Activated naive CD8-positive, alpha-beta T cell treated with anti-CD3 and anti-CD28 coated beads, Interleukin-2, amount 10 ng/mL, durations not matched to agents 7 days and 5 days (primary cell): ENCODE measurements at regions of chr14 and their contacts with region 1.

Region 1: DNA sequence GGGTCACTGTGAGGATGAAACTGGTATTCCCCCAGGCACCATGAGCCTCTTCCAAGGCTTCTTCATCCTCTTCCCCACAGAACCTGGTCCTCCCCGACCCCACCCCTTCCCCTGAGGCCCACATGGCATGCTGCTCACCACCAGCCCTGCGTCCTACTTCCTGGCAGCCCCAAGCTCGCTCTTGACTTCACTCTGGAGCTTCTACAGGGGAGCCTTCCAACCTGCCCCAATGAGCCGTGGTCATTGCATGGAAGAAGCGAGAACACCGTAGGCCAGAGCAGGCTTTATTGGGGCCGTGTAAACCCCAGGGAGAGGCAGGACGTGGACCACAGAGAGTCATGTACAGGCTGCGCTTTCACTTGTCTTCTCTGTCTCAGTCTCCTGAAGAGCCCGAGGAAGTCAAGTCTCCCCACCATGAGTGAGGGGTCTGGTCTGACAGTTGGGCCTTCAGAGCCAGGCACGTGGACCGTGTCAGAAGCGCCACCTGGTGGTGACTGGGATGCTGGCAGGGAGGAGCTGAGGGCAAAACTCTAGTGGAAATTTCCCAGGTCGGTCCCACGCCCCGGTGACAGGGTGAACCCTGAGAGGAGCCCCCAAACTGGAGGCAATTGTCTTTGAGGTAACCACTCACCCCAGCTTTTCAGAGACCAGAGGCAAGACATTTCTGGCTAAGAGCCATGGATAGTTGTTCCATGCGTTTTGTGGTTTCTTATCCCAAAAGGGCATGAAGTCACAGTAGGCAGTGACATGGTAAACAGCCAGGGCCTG is 17.5 kb downstream of the RPS6KL1 start:
- DNase-seq: peak; percentile 82
- ATAC-seq: peak; percentile 35
- H3K4me3 Mint-ChIP-seq: no peak overlapping the region
- H3K27ac Mint-ChIP-seq: peak overlapping the region; percentile 38
- H3K4me1 Mint-ChIP-seq: peaks cover 15% of the 10 kb centered on the region
- H3K27me3 Mint-ChIP-seq: no peaks in the 10 kb centered on the region

Region 2: DNA sequence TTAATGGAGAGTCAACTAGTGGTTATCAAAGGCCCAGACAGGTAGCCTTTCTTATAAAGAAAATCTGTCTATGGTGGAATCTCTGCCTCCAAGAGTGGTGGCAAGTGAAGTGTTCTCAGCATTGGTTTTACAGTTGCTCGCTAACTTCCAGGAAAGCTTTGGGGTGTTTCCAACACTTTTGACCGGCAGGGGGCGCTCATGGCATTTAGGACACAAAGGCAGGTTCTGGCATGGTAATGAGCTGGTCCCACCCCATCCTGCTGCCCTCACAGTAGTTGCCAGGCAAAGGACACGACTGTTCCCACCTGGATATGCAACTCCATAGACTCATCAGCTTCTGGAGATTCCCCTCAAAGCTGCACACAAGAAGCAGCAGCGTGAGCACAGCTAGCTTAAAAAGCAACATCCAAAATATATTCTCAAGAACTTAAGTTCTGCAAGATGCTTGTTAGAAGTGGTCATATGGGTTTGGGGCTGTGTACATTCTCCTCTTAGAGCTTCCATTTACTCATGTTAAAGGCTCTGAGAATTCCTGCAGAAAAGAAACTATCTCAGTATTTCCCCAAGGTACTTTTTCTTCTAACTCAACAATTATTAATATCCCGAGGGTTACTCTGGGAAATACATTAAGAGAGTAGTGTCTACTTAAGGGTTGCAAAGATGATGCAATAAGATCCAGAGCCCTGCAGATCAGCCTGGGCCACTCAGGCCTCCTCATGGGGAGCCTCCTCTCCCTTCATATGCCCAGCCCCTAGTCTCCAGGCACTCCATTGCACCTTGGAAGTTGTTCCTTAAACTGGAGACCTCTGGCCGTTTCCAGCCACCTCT is 44.4 kb before region 1 on chr14:
- POLR2A ChIA-PET with region 1: interaction called, 51 read pairs
- DNase-seq: peak; percentile 93
- ATAC-seq: peak; percentile 82
- H3K4me3 Mint-ChIP-seq: no peak overlapping the region
- H3K27ac Mint-ChIP-seq: no peak overlapping the region
- H3K4me1 Mint-ChIP-seq: peaks cover 2% of the 10 kb centered on the region
- H3K27me3 Mint-ChIP-seq: no peaks in the 10 kb centered on the region